B cell (primary cell): ENCODE measurements at regions of chr22 and their contacts with region 1.

Region 1: GRCh38 chr22:21567456-21568346 is at the start of gene UBE2L3:
- DNase-seq: peak; percentile 90
- ATAC-seq: peak; percentile 92
- H3K4me3 ChIP-seq: peak within 1 kb of the TSS; percentile 70 to 91 (median 76)
- H3K4me3 Mint-ChIP-seq: peak within 1 kb of the TSS; percentile 90
- H3K27ac ChIP-seq: peak within 1 kb of the TSS; percentile 81 to 93
- H3K27ac Mint-ChIP-seq: peak within 1 kb of the TSS; percentile 84
- H3K4me1 ChIP-seq: peaks cover 27 to 34% of the 10 kb centered on the region in 2 donors
- H3K4me1 Mint-ChIP-seq: peaks cover 35% of the 10 kb centered on the region
- H3K27me3 ChIP-seq: no peaks in the 10 kb centered on the region
- H3K27me3 Mint-ChIP-seq: no peaks in the 10 kb centered on the region
- CTCF ChIP-seq: no peak
- total RNA-seq, gene UBE2L3: 28.6 and 30.9 TPM in 2 replicates

Region 2: GRCh38 chr22:21606775-21607174 is 39.1 kb after region 1 on chr22:
- CTCF ChIA-PET with region 1: no interaction called
- POLR2A ChIA-PET with region 1: interaction called, 10 read pairs
- intact Hi-C with region 1: no loop called
- DNase-seq: no peak
- ATAC-seq: no peak
- H3K4me3 ChIP-seq: no peak overlapping the region
- H3K4me3 Mint-ChIP-seq: no peak overlapping the region
- H3K27ac ChIP-seq: no peak overlapping the region
- H3K27ac Mint-ChIP-seq: no peak overlapping the region
- H3K4me1 ChIP-seq: peaks cover 4 to 9% of the 10 kb centered on the region in 2 donors
- H3K4me1 Mint-ChIP-seq: peaks cover 32% of the 10 kb centered on the region
- H3K27me3 ChIP-seq: no peaks in the 10 kb centered on the region
- H3K27me3 Mint-ChIP-seq: no peaks in the 10 kb centered on the region
- CTCF ChIP-seq: no peak